MCF 10A (cell line): ENCODE measurements at regions of chr12 and their contacts with region 1.

Region 1: DNA sequence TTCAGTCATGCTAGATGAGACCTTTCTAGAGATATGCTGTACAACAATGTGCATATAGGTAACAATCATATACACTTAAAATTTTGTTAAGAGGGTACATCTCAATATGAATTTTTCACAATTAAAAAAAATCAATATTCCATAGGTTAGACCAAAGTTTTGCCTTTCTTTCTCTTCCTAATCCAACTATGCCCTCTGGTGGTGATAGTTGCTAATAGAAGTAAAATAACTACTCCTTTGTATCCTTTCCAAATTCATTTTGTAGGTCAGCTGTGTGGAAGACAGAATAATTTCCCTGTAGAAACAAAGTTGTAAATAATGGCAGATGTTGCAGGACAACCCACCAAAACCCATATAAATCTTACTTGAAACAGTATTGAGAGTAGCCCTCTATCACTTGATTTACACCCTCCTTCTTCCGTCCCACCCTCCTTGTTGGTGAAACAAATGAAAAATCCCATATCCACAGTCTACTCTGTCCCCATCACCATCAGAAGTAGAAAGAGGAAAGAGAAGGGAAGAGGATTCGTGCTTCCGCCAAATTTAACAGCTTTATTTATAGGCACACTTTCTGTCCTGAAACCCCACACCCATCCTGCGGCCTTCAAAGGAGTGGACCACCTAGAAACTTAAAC is 34.2 kb upstream of the KICS2 start:
- DNase-seq: peak; percentile 76
- H3K4me3 Mint-ChIP-seq: no peak overlapping the region
- H3K27ac Mint-ChIP-seq: no peak overlapping the region
- H3K4me1 Mint-ChIP-seq: peaks cover 10% of the 10 kb centered on the region
- H3K27me3 Mint-ChIP-seq: no peaks in the 10 kb centered on the region
- CTCF ChIP-seq: peak; percentile 68

Region 2: GRCh38 chr12:63826006-63826585 is 430.2 kb before region 1 on chr12:
- CTCF ChIA-PET with region 1: interaction called, 44 read pairs
- POLR2A ChIA-PET with region 1: no interaction called
- intact Hi-C with region 1: loop called (anchors 1 kb)
- DNase-seq: peak; percentile 76
- H3K4me3 Mint-ChIP-seq: no peak overlapping the region
- H3K27ac Mint-ChIP-seq: no peak overlapping the region
- H3K4me1 Mint-ChIP-seq: peaks cover 8% of the 10 kb centered on the region
- H3K27me3 Mint-ChIP-seq: no peaks in the 10 kb centered on the region
- CTCF ChIP-seq: peak; percentile 75

Region 3: GRCh38 chr12:64088431-64089349 is 167.6 kb before region 1 on chr12:
- CTCF ChIA-PET with region 1: interaction called, 3 read pairs
- POLR2A ChIA-PET with region 1: no interaction called
- intact Hi-C with region 1: loop called (anchors 10 kb)
- DNase-seq: peak; percentile 94
- H3K4me3 Mint-ChIP-seq: peak overlapping the region; percentile 73
- H3K27ac Mint-ChIP-seq: peak overlapping the region; percentile 99
- H3K4me1 Mint-ChIP-seq: peaks cover 23% of the 10 kb centered on the region
- H3K27me3 Mint-ChIP-seq: no peaks in the 10 kb centered on the region
- CTCF ChIP-seq: no peak